ENCODE measurements at regions of chr3 and their contacts with region 1.

Region 1: GRCh38 chr3:127831723-127832172 is 9.4 kb upstream of the MGLL start:
- DNase-seq: no peak
- ATAC-seq: peak; percentile 15; the same call in 1 of the 3 replicates
- H3K4me3 ChIP-seq: no peak overlapping the region
- H3K27ac ChIP-seq: no peak overlapping the region
- H3K4me1 ChIP-seq: peaks cover 37% of the 10 kb centered on the region
- H3K27me3 ChIP-seq: no peaks in the 10 kb centered on the region
- CTCF ChIP-seq: peak; percentile 37 to 64 (median 58)
- EP300 ChIP-seq: no peak
- POLR2A ChIP-seq: no peak
- RAD21 ChIP-seq: peak; percentile 73

Region 2: GRCh38 chr3:127652231-127652995 is 179.3 kb before region 1 on chr3:
- CTCF ChIA-PET with region 1: interaction called, 8 read pairs
- POLR2A ChIA-PET with region 1: no interaction called
- RAD21 ChIA-PET with region 1: no interaction called
- SMC1A ChIA-PET with region 1: interaction called, 3 read pairs
- in situ Hi-C with region 1: no loop called
- intact Hi-C with region 1: loop called (anchors 1 kb)
- DNase-seq: no peak
- ATAC-seq: peak; percentile 94
- H3K4me3 ChIP-seq: no peak overlapping the region
- H3K27ac ChIP-seq: no peak overlapping the region
- H3K4me1 ChIP-seq: peaks cover 6% of the 10 kb centered on the region; the same call in 1 of the 2 replicates
- H3K27me3 ChIP-seq: no peaks in the 10 kb centered on the region; a peak in 1 of 4 replicates
- CTCF ChIP-seq: peak; percentile 72 to 91 (median 80)
- EP300 ChIP-seq: no peak
- POLR2A ChIP-seq: no peak
- RAD21 ChIP-seq: peak; percentile 97

Region 3: DNA sequence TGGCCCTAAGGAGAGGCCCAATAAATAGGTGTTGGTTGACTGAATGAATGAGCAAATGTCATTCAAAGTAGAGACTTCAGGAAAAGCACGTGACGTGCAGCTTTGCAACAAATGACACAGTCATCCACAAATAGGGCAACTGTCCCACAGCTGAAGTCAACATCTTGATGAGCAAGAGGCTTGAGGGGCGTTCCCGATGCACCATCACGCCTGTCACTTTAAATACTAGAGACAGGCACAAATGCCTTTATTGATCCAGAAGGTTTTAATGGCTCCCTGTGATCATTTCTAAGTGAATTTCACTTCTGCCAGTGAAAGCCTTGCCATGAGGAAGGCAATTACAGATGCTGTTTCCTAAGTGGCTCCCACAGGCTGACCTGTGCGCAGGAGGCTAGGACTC is 115.4 kb before region 1 on chr3:
- CTCF ChIA-PET with region 1: no interaction called
- POLR2A ChIA-PET with region 1: no interaction called
- RAD21 ChIA-PET with region 1: no interaction called
- SMC1A ChIA-PET with region 1: no interaction called
- in situ Hi-C with region 1: no loop called
- intact Hi-C with region 1: no loop called
- DNase-seq: no peak
- ATAC-seq: no peak
- H3K4me3 ChIP-seq: no peak overlapping the region
- H3K27ac ChIP-seq: no peak overlapping the region
- H3K4me1 ChIP-seq: peaks cover 6% of the 10 kb centered on the region; the same call in 1 of the 2 replicates
- H3K27me3 ChIP-seq: no peaks in the 10 kb centered on the region
- CTCF ChIP-seq: no peak
- EP300 ChIP-seq: no peak
- POLR2A ChIP-seq: no peak
- RAD21 ChIP-seq: no peak

Region 4: GRCh38 chr3:127735767-127736704 is 95.7 kb before region 1 on chr3:
- CTCF ChIA-PET with region 1: interaction called, 6 read pairs
- POLR2A ChIA-PET with region 1: interaction called, 9 read pairs
- RAD21 ChIA-PET with region 1: interaction called, 8 read pairs
- SMC1A ChIA-PET with region 1: interaction called, 19 read pairs
- in situ Hi-C with region 1: no loop called
- intact Hi-C with region 1: no loop called
- DNase-seq: peak; percentile 85
- ATAC-seq: peak; percentile 85
- H3K4me3 ChIP-seq: peak overlapping the region; percentile 77
- H3K27ac ChIP-seq: peak overlapping the region; percentile 97
- H3K4me1 ChIP-seq: peaks cover 31% of the 10 kb centered on the region
- H3K27me3 ChIP-seq: no peaks in the 10 kb centered on the region
- CTCF ChIP-seq: no peak
- EP300 ChIP-seq: peak in 1 of 2 experiments; percentile 71
- POLR2A ChIP-seq: no peak
- RAD21 ChIP-seq: no peak

Region 5: GRCh38 chr3:127791211-127791946 is 40.4 kb before region 1 on chr3:
- CTCF ChIA-PET with region 1: interaction called, 8 read pairs
- POLR2A ChIA-PET with region 1: interaction called, 3 read pairs
- RAD21 ChIA-PET with region 1: interaction called, 13 read pairs
- SMC1A ChIA-PET with region 1: interaction called, 6 read pairs
- in situ Hi-C with region 1: no loop called
- intact Hi-C with region 1: no loop called
- DNase-seq: peak; percentile 41
- ATAC-seq: peak; percentile 99
- H3K4me3 ChIP-seq: no peak overlapping the region
- H3K27ac ChIP-seq: no peak overlapping the region
- H3K4me1 ChIP-seq: peaks cover 13% of the 10 kb centered on the region
- H3K27me3 ChIP-seq: no peaks in the 10 kb centered on the region
- CTCF ChIP-seq: peak; percentile 51 to 58 (median 52); a peak in 5 of 6 replicates
- EP300 ChIP-seq: no peak
- POLR2A ChIP-seq: no peak
- RAD21 ChIP-seq: peak; percentile 68

Region 6: DNA sequence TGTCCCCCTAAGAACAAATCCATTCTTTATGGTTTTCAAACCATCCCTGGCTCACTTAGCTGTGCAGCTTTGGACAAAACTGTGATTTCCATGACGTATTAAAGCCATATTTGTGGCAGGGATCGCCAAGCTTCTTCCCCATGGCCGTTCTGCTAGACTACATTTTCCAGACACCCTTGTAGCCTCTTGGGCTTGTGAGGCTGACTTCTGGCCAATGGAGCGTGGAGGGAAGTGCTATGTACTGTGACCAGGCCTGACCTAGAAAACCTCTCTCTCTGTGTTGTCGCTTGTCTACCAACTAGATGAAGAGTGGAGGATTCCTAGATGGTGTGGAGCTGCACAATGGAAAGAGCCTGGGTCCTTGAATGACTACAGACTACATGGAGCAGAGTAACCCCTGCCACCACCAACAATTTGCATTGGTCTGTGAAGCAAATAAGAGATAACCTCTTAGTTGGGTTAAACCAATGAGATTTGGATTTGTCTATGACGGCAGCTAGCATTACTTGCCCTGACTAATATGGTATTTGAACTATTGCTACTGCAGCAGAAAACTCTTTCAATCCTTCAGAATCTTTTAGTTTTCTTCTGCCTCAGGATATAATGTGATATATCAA is 12.7 kb after region 1 on chr3:
- CTCF ChIA-PET with region 1: interaction called, 18 read pairs
- POLR2A ChIA-PET with region 1: interaction called, 10 read pairs
- RAD21 ChIA-PET with region 1: interaction called, 32 read pairs
- SMC1A ChIA-PET with region 1: interaction called, 28 read pairs
- in situ Hi-C with region 1: no loop called
- intact Hi-C with region 1: no loop called
- DNase-seq: peak; percentile 51
- ATAC-seq: peak; percentile 92
- H3K4me3 ChIP-seq: no peak overlapping the region
- H3K27ac ChIP-seq: no peak overlapping the region
- H3K4me1 ChIP-seq: peaks cover 31% of the 10 kb centered on the region
- H3K27me3 ChIP-seq: no peaks in the 10 kb centered on the region
- CTCF ChIP-seq: no peak
- EP300 ChIP-seq: no peak
- POLR2A ChIP-seq: no peak
- RAD21 ChIP-seq: no peak

Region 7: GRCh38 chr3:127911421-127911931 is 79.7 kb after region 1 on chr3:
- CTCF ChIA-PET with region 1: no interaction called
- POLR2A ChIA-PET with region 1: no interaction called
- RAD21 ChIA-PET with region 1: no interaction called
- SMC1A ChIA-PET with region 1: no interaction called
- in situ Hi-C with region 1: no loop called
- intact Hi-C with region 1: no loop called
- DNase-seq: no peak
- ATAC-seq: no peak
- H3K4me3 ChIP-seq: no peak overlapping the region
- H3K27ac ChIP-seq: no peak overlapping the region
- H3K4me1 ChIP-seq: no peaks in the 10 kb centered on the region
- H3K27me3 ChIP-seq: no peaks in the 10 kb centered on the region
- CTCF ChIP-seq: no peak
- EP300 ChIP-seq: no peak
- POLR2A ChIP-seq: no peak
- RAD21 ChIP-seq: no peak

Region 8: DNA sequence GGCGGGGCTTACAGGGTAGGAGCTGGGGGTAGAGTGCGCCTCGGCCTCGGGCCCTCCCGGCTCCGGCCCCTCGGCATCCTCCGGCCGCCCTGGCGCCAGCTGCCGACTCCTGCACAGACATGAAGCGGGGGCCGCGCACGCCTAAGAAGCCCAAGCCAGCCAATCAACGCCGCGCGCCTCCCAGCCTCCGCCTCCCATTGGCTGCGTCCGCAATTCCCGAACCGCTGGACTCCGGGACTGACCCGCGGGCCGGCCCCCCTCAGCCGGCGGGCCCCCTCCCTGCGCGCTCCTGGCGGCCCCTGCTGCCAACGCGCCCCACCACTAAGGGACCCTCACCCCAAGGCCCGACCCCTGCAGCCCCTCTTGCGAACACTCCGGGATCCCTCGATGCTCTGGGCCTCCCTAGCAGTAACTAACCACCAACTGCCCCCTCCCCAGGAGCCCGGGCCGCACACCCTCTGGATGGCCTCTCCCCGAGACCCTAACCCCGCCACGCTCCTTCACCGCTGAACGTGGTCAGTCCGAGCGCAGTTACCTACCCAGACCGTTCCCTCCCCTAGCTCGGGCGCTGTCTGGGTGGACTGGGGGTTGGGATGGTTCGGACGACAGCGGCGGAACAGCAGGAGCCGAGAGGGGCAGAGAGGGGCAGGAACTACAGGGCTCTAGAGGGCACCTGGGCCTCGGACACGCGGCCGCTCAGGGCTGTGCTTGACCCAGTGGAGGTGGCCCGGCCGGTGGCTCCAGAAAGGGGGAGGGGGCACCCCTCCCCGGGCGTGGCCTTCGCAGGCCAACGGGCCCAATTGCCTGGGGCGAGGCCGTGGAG is 656.3 kb after region 1 on chr3:
- CTCF ChIA-PET with region 1: no interaction called
- POLR2A ChIA-PET with region 1: no interaction called
- RAD21 ChIA-PET with region 1: no interaction called
- SMC1A ChIA-PET with region 1: no interaction called
- in situ Hi-C with region 1: no loop called
- intact Hi-C with region 1: no loop called
- DNase-seq: no peak
- ATAC-seq: peak; percentile 68
- H3K4me3 ChIP-seq: no peak overlapping the region; the same call in 1 of the 2 replicates
- H3K27ac ChIP-seq: no peak overlapping the region
- H3K4me1 ChIP-seq: no peaks in the 10 kb centered on the region
- H3K27me3 ChIP-seq: peaks cover 26 to 48% of the 10 kb centered on the region in 2 experiments
- CTCF ChIP-seq: no peak
- EP300 ChIP-seq: no peak
- POLR2A ChIP-seq: no peak
- RAD21 ChIP-seq: no peak